Ascending aorta (tissue), 2 donors: ENCODE measurements at regions of chr14 and their contacts with region 1.

Region 1: GRCh38 chr14:52824507-52824906 is 33.1 kb upstream of the GNPNAT1 start:
- DNase-seq: no peak
- H3K4me3 ChIP-seq: no peak overlapping the region
- H3K27ac ChIP-seq: no peak overlapping the region
- H3K4me1 ChIP-seq: no peaks in the 10 kb centered on the region
- H3K27me3 ChIP-seq: no peaks in the 10 kb centered on the region
- CTCF ChIP-seq: no peak

Region 2: GRCh38 chr14:52876311-52876710 is 51.8 kb after region 1 on chr14:
- intact Hi-C with region 1: loop called (anchors 5 kb)
- DNase-seq: no peak
- H3K4me3 ChIP-seq: no peak overlapping the region
- H3K27ac ChIP-seq: peak overlapping the region; percentile 52 to 72
- H3K4me1 ChIP-seq: peaks cover 0 to 38% of the 10 kb centered on the region in 2 donors
- H3K27me3 ChIP-seq: no peaks in the 10 kb centered on the region
- CTCF ChIP-seq: no peak

Region 3: DNA sequence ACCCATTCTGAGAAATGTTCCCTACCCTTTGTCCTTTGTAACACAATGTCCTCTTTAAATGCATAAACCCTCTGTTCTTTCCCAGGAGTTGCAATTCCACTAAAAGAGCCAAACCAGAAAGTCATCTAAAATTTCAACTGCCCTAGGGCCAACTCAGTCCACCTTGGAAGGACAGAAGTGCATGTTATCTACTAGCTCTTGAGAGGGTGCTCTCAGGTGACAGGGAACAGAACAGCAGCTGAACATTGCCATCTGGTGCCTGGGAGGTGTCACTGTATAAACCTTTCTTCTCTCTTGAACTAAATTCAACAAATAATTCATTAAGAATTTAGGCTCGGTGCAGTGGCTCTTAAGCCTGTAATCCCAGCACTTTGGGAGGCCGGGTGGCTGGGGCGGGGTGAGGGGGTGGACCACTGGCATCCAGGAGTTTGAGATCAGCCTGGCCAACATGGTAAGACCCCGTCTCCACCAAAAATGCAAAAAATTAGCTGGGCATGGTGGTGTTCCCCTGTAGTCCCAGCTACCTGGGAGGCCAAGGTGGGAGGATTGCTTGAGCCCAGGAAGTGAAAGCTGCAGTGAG is 136.6 kb after region 1 on chr14:
- intact Hi-C with region 1: loop called (anchors 1 kb)
- DNase-seq: peak in 1 of 2 donors; percentile 78
- H3K4me3 ChIP-seq: no peak overlapping the region
- H3K27ac ChIP-seq: peak overlapping the region; percentile 60 to 64
- H3K4me1 ChIP-seq: peaks cover 0 to 8% of the 10 kb centered on the region in 2 donors
- H3K27me3 ChIP-seq: no peaks in the 10 kb centered on the region
- CTCF ChIP-seq: peak; percentile 70 to 78 (median 78)

Region 4: DNA sequence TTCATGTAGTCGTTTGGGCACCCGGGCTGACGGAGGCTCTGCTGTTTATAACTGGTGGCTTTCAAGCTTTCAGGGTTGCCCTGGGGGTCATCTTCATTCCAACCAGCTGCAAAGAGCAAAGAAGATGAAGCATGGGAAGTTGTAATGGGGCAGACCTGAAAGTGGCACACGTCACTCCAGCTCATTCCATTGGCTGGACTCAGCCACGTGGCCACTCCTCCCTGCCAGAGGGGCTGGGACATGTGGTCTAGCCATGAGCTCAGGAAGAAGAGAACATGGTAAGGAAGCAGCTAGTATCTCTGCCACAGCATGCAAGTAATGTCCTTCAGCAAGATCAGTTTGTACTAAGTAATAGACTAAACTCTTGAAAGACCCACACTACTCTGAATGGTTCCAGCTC is 178.1 kb after region 1 on chr14:
- intact Hi-C with region 1: no loop called
- DNase-seq: no peak
- H3K4me3 ChIP-seq: no peak overlapping the region
- H3K27ac ChIP-seq: no peak overlapping the region
- H3K4me1 ChIP-seq: peaks cover 0 to 4% of the 10 kb centered on the region in 2 donors
- H3K27me3 ChIP-seq: no peaks in the 10 kb centered on the region
- CTCF ChIP-seq: no peak

Region 5: DNA sequence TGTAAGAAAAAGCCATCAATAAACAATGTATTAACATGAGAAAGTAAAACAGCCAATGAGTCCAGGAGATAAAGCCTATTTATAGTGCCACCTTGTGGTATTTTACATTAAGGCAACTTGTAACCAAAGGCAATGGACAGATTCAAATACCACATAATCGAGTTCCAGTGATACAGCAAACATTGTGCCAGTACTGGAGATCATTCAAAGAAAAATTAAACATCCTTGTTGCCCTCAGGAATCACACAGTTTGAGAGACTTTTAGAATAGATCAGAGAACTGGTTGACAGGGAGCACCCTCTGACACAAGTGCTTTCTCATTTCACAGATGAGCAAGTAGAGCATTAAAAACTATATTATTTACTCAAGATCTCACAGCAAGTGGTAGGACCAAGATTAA is 230.5 kb after region 1 on chr14:
- intact Hi-C with region 1: loop called (anchors 2 kb)
- DNase-seq: no peak
- H3K4me3 ChIP-seq: no peak overlapping the region
- H3K27ac ChIP-seq: no peak overlapping the region
- H3K4me1 ChIP-seq: no peaks in the 10 kb centered on the region
- H3K27me3 ChIP-seq: no peaks in the 10 kb centered on the region
- CTCF ChIP-seq: peak; percentile 19 to 77 (median 74)

Region 6: DNA sequence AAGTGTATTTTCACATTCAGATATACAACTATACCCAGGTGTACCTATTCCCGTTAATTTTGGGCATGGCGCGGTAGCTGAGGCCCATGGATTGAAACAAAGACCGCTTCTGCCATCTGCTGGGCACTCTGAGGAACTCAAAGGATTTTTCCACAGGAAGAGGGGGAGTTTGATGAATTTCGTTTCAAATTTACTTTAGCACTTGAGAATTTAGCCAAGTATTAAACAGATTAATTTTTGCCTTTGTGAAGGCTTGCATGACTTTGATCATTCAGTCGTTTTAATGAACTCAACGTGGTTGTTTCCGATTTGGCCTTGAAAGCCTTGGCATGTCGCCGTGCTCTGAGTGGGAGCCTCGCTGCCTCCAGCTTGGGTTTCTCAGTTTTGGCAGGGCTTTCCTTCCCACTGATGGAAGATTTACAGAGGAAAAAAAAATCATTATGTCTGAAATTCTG is 481.8 kb after region 1 on chr14:
- intact Hi-C with region 1: loop called (anchors 10 kb)
- DNase-seq: peak in 1 of 2 donors; percentile 70
- H3K4me3 ChIP-seq: peak overlapping the region; percentile 52 to 60
- H3K27ac ChIP-seq: peak overlapping the region in 1 of 2 donors; percentile 36
- H3K4me1 ChIP-seq: no peaks in the 10 kb centered on the region
- H3K27me3 ChIP-seq: no peaks in the 10 kb centered on the region
- CTCF ChIP-seq: peak; percentile 66 to 80 (median 77)